A673 (cell line): ENCODE measurements at regions of chr3 and their contacts with region 1.

Region 1: GRCh38 chr3:62020515-62021105 is 352.7 kb downstream of the FEZF2 start:
- DNase-seq: no peak
- H3K4me3 ChIP-seq: no peak overlapping the region
- H3K27ac ChIP-seq: no peak overlapping the region
- H3K4me1 ChIP-seq: no peaks in the 10 kb centered on the region
- H3K27me3 ChIP-seq: no peaks in the 10 kb centered on the region
- CTCF ChIP-seq: no peak

Region 2: DNA sequence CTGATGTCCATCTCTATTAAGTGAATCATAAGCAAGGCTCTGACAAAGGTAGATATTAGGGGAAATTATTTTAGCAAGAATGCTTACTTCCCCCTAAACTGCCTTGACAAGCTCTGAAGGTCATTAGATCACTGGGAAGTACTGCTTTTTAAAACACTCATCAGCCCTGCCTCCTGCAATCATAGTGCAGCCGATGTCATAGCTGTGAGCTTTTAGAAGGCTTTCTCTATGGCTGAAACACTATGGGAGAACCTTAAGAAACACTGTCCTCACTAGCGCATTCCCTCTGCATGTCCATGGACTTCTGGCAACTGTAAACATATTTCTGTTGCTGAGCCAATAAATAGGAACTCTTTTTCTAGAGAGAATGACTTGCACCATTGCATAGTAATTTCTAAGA is 498.0 kb before region 1 on chr3:
- CTCF ChIA-PET with region 1: interaction called, 10 read pairs
- POLR2A ChIA-PET with region 1: no interaction called
- intact Hi-C with region 1: no loop called
- DNase-seq: no peak
- H3K4me3 ChIP-seq: no peak overlapping the region
- H3K27ac ChIP-seq: no peak overlapping the region
- H3K4me1 ChIP-seq: no peaks in the 10 kb centered on the region
- H3K27me3 ChIP-seq: no peaks in the 10 kb centered on the region
- CTCF ChIP-seq: no peak